IMR-90 (cell line): ENCODE measurements at regions of chr15 and their contacts with region 1.

Region 1: DNA sequence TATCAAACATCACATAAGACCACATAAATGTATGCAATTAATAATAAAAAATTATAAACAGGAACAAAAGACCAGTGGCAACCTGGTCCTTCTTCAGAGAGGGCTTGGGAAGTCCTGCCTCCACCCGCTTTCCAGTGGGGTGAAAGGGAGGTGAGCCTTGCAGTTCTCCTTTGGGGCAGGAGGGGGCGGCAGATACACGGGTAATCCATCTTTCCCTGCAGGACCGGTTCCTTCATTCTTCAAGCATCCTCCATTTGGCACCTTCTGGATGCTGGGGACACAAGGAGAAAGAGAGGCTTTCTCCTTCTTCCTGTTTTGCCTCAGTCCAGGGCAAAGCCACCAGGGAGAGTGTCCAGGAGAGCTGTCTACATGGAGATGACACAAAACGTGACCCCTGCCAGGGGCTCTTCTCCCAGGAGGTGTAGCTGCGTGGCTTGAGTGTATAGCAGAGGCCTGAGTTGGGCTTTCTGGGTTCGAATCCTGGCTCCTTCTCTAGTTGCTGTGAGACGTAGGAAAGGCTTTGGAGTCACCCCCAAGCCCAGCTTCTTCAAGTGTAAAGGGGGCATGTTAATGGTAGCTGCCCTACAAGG is 23.2 kb downstream of the RPLP1 start:
- DNase-seq: peak; percentile 63
- ATAC-seq: peak; percentile 93
- H3K4me3 ChIP-seq: no peak overlapping the region
- H3K27ac ChIP-seq: no peak overlapping the region
- H3K4me1 ChIP-seq: peaks cover 9% of the 10 kb centered on the region
- H3K27me3 ChIP-seq: peaks cover 11% of the 10 kb centered on the region
- CTCF ChIP-seq: peak; percentile 92
- POLR2A ChIP-seq: no peak
- RAD21 ChIP-seq: peak; percentile 94

Region 2: DNA sequence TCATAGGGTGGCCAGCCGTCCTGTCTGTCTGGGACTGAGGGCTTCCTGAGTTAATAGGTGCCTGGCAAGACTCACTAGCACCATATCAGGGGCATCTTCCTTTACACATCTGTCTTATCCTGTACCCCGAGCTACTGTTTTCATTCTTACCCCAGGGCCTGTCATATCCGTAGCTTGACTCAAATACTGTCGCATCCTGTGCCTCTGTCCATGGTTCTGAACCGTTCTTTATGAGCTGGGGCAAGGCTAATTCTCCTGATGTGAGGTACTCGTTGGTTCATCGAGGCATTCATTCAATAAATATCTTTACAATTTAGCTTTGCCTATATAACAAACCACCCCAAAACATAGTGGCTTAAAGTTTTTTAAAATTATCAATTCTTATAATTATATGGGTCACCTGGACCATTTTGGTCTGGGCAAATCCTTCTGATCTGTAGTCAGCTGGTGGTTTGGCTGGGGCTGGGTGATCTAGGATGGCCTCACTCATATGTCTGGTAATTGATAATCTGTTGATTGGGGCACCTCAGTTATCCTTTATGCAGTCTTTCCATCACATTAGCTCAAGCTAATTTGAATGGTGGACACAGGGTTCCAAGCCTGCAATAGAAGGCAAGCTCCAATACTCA is 500.6 kb after region 1 on chr15:
- CTCF ChIA-PET with region 1: no interaction called
- POLR2A ChIA-PET with region 1: interaction called, 3 read pairs
- dilution Hi-C with region 1: no loop called
- in situ Hi-C with region 1: no loop called
- intact Hi-C with region 1: loop called (anchors 10 kb)
- DNase-seq: peak; percentile 41
- ATAC-seq: peak; percentile 65; the same call in 1 of the 2 replicates
- H3K4me3 ChIP-seq: no peak overlapping the region
- H3K27ac ChIP-seq: no peak overlapping the region
- H3K4me1 ChIP-seq: no peaks in the 10 kb centered on the region
- H3K27me3 ChIP-seq: peaks cover 19% of the 10 kb centered on the region
- CTCF ChIP-seq: no peak
- POLR2A ChIP-seq: no peak
- RAD21 ChIP-seq: no peak